ENCODE measurements at regions of chr5 and their contacts with region 1.

Region 1: GRCh38 chr5:102583276-102584124 is 84.7 kb upstream of the SLCO6A1 start:
- DNase-seq: no peak
- ATAC-seq: no peak
- H3K4me3 ChIP-seq: no peak overlapping the region
- H3K4me1 ChIP-seq: no peaks in the 10 kb centered on the region
- CTCF ChIP-seq: no peak

Region 2: GRCh38 chr5:103031607-103032006 is 448.1 kb after region 1 on chr5:
- intact Hi-C with region 1: loop called in 1 of 2 experiments (anchors 10 kb)
- DNase-seq: no peak
- ATAC-seq: no peak
- H3K4me3 ChIP-seq: no peak overlapping the region
- H3K4me1 ChIP-seq: no peaks in the 10 kb centered on the region
- CTCF ChIP-seq: no peak